IMR-90 (cell line): ENCODE measurements at regions of chr14 and their contacts with region 1.

Region 1: DNA sequence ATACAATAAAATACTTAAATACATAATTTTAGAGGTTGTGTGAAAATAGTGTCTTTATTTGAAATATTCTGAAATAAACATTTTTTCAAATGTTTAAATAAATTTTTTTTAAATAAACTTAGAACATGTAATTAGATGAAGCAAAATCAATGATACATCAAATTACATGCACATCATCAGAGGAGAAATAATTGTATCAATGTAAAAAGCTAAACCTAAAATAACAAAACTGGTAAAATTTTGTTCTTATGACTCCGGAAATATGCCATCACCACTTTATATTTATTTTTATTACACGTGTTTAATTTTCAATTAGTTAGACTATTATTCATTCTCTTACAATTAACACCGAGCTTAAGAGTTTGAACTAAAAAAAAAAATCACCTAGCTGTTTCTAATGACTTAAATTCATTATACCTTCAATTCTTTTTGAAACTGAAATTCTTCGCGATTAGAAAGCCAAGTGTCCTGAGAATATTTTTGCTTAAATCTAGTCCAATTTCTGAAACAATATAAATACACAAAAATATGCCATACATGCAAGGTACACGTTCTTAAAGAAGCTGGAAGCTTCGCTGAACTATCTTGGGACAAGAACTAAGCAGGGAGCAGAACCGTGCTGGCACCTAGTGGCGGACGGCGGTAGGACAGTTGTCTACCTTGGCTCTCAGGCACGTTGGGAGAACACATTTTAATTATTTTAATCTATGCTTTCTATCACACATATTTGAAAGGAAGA is 230.5 kb downstream of the SLC25A21 start:
- DNase-seq: peak; percentile 64
- ATAC-seq: peak; percentile 88
- H3K4me3 ChIP-seq: no peak overlapping the region
- H3K27ac ChIP-seq: no peak overlapping the region
- H3K4me1 ChIP-seq: peaks cover 3% of the 10 kb centered on the region
- H3K27me3 ChIP-seq: no peaks in the 10 kb centered on the region
- CTCF ChIP-seq: peak; percentile 88
- POLR2A ChIP-seq: no peak
- RAD21 ChIP-seq: peak; percentile 78

Region 2: GRCh38 chr14:35883677-35884293 is 1058.2 kb before region 1 on chr14:
- CTCF ChIA-PET with region 1: interaction called, 3 read pairs
- POLR2A ChIA-PET with region 1: no interaction called
- dilution Hi-C with region 1: no loop called
- in situ Hi-C with region 1: no loop called
- intact Hi-C with region 1: loop called (anchors 5 kb)
- DNase-seq: peak; percentile 18
- ATAC-seq: peak; percentile 59
- H3K4me3 ChIP-seq: no peak overlapping the region
- H3K27ac ChIP-seq: no peak overlapping the region
- H3K4me1 ChIP-seq: peaks cover 2% of the 10 kb centered on the region
- H3K27me3 ChIP-seq: no peaks in the 10 kb centered on the region; the same call in 1 of the 2 replicates
- CTCF ChIP-seq: peak; percentile 65
- POLR2A ChIP-seq: no peak
- RAD21 ChIP-seq: peak; percentile 33

Region 3: GRCh38 chr14:36538051-36538450 is 403.9 kb before region 1 on chr14:
- CTCF ChIA-PET with region 1: no interaction called
- POLR2A ChIA-PET with region 1: no interaction called
- dilution Hi-C with region 1: no loop called
- in situ Hi-C with region 1: no loop called
- intact Hi-C with region 1: no loop called
- DNase-seq: no peak
- ATAC-seq: no peak
- H3K4me3 ChIP-seq: no peak overlapping the region
- H3K27ac ChIP-seq: no peak overlapping the region
- H3K4me1 ChIP-seq: no peaks in the 10 kb centered on the region
- H3K27me3 ChIP-seq: peaks cover 2% of the 10 kb centered on the region; the same call in 1 of the 2 replicates
- CTCF ChIP-seq: no peak
- POLR2A ChIP-seq: no peak
- RAD21 ChIP-seq: no peak

Region 4: GRCh38 chr14:36553656-36554260 is 388.2 kb before region 1 on chr14:
- CTCF ChIA-PET with region 1: interaction called, 6 read pairs
- POLR2A ChIA-PET with region 1: no interaction called
- dilution Hi-C with region 1: no loop called
- in situ Hi-C with region 1: no loop called
- intact Hi-C with region 1: loop called (anchors 5 kb)
- DNase-seq: peak; percentile 51
- ATAC-seq: peak; percentile 90
- H3K4me3 ChIP-seq: no peak overlapping the region
- H3K27ac ChIP-seq: no peak overlapping the region
- H3K4me1 ChIP-seq: no peaks in the 10 kb centered on the region
- H3K27me3 ChIP-seq: no peaks in the 10 kb centered on the region; the same call in 1 of the 2 replicates
- CTCF ChIP-seq: peak; percentile 81
- POLR2A ChIP-seq: no peak
- RAD21 ChIP-seq: peak; percentile 62

Region 5: GRCh38 chr14:36647824-36648753 is 293.9 kb before region 1 on chr14:
- CTCF ChIA-PET with region 1: interaction called, 11 read pairs
- POLR2A ChIA-PET with region 1: no interaction called
- dilution Hi-C with region 1: no loop called
- in situ Hi-C with region 1: no loop called
- intact Hi-C with region 1: loop called (anchors 2 kb)
- DNase-seq: peak; percentile 30
- ATAC-seq: peak; percentile 91
- H3K4me3 ChIP-seq: peak overlapping the region; percentile 42
- H3K27ac ChIP-seq: no peak overlapping the region
- H3K4me1 ChIP-seq: 0 out of 2 replicates have a peak, but pooled peaks cover 4% of the 10 kb centered on the region
- H3K27me3 ChIP-seq: peaks cover 58% of the 10 kb centered on the region
- CTCF ChIP-seq: peak; percentile 60
- POLR2A ChIP-seq: no peak
- RAD21 ChIP-seq: peak; percentile 60

Region 6: DNA sequence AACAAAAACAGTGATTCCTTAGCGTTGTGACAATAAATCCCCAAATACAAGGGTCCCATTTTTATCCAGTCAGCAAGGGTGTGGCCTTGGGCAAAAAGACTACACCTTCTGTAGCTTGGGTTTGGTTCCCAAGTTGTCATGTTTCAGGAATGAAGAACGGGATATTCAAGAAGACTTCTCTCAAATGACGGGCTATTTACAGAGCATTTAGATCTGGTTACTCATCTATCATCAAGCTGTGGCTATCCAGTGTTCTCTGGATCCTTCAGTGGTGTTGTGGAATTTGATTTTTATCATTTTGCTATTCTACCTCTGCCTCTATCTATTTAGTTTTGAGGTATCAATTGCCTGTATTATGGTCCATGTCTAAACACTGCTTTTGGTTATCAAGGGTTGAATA is 10.8 kb after region 1 on chr14:
- CTCF ChIA-PET with region 1: interaction called, 13 read pairs
- POLR2A ChIA-PET with region 1: no interaction called
- dilution Hi-C with region 1: no loop called
- in situ Hi-C with region 1: no loop called
- intact Hi-C with region 1: no loop called
- DNase-seq: peak; percentile 53
- ATAC-seq: peak; percentile 49; the same call in 1 of the 2 replicates
- H3K4me3 ChIP-seq: no peak overlapping the region
- H3K27ac ChIP-seq: no peak overlapping the region
- H3K4me1 ChIP-seq: no peaks in the 10 kb centered on the region
- H3K27me3 ChIP-seq: no peaks in the 10 kb centered on the region
- CTCF ChIP-seq: no peak
- POLR2A ChIP-seq: no peak
- RAD21 ChIP-seq: no peak

Region 7: DNA sequence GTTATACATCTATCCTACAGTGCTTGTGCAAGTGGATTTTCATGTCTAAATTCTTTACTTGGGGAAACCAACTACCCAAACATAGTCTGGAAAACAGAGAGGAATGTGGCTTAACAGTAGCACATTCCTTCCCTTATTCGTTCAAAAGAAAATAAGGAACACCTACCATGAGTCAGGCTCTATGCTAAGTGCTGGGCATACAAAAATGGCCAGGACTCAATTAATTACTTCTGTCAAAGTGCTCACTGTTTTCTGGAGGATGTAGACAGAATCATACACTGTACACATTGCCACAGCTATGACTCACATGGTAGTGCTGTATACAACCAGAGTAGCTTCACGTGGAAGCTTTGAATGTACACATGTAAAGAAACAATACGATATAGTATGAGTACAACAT is 180.3 kb after region 1 on chr14:
- CTCF ChIA-PET with region 1: interaction called, 6 read pairs
- POLR2A ChIA-PET with region 1: no interaction called
- dilution Hi-C with region 1: no loop called
- in situ Hi-C with region 1: no loop called
- intact Hi-C with region 1: loop called (anchors 2 kb)
- DNase-seq: peak; percentile 85
- ATAC-seq: peak; percentile 87
- H3K4me3 ChIP-seq: no peak overlapping the region
- H3K27ac ChIP-seq: no peak overlapping the region
- H3K4me1 ChIP-seq: peaks cover 2% of the 10 kb centered on the region; the same call in 1 of the 2 replicates
- H3K27me3 ChIP-seq: no peaks in the 10 kb centered on the region
- CTCF ChIP-seq: no peak
- POLR2A ChIP-seq: no peak
- RAD21 ChIP-seq: no peak

Region 8: DNA sequence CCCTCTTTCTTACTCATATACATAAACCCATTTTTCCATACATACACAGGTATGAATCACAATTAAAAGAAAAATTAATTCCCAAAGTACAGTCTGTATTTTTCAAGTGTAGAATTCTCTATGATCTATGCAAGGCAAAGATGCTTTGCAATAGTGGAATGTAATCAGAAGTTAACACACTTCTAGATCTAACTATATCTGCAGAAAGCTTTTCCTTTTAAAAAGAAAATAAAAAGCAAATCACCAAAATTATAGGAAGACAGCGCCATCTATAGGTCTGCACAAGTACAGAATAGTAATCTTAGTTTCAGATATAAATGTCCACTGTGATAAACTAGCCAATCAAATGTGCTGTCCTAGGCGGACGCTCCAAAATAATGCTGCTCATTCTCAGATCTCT is 208.5 kb after region 1 on chr14:
- CTCF ChIA-PET with region 1: interaction called, 5 read pairs
- POLR2A ChIA-PET with region 1: no interaction called
- dilution Hi-C with region 1: no loop called
- in situ Hi-C with region 1: no loop called
- intact Hi-C with region 1: loop called (anchors 2 kb)
- DNase-seq: peak; percentile 58
- ATAC-seq: peak; percentile 87
- H3K4me3 ChIP-seq: no peak overlapping the region
- H3K27ac ChIP-seq: no peak overlapping the region
- H3K4me1 ChIP-seq: no peaks in the 10 kb centered on the region
- H3K27me3 ChIP-seq: peaks cover 4% of the 10 kb centered on the region; the same call in 1 of the 2 replicates
- CTCF ChIP-seq: peak; percentile 82
- POLR2A ChIP-seq: no peak
- RAD21 ChIP-seq: peak; percentile 62

Region 9: GRCh38 chr14:37311252-37311651 is 369.3 kb after region 1 on chr14:
- CTCF ChIA-PET with region 1: no interaction called
- POLR2A ChIA-PET with region 1: no interaction called
- dilution Hi-C with region 1: no loop called
- in situ Hi-C with region 1: no loop called
- intact Hi-C with region 1: no loop called
- DNase-seq: no peak
- ATAC-seq: no peak
- H3K4me3 ChIP-seq: no peak overlapping the region
- H3K27ac ChIP-seq: no peak overlapping the region
- H3K4me1 ChIP-seq: no peaks in the 10 kb centered on the region
- H3K27me3 ChIP-seq: no peaks in the 10 kb centered on the region
- CTCF ChIP-seq: no peak
- POLR2A ChIP-seq: no peak
- RAD21 ChIP-seq: no peak